CD4-positive, alpha-beta memory T cell (primary cell): ENCODE measurements at regions of chr11 and their contacts with region 1.

Region 1: GRCh38 chr11:13880634-13881033 is 81.9 kb upstream of the SPON1 start:
- DNase-seq: no peak
- H3K4me3 ChIP-seq: no peak overlapping the region
- H3K4me3 Mint-ChIP-seq: no peak overlapping the region
- H3K27ac ChIP-seq: no peak overlapping the region
- H3K27ac Mint-ChIP-seq: peak overlapping the region in 4 of 7 donors; percentile 8 to 75 (median 36)
- H3K4me1 ChIP-seq: no peaks in the 10 kb centered on the region
- H3K4me1 Mint-ChIP-seq: peaks cover 0 to 8% (median 4%) of the 10 kb centered on the region in 4 donors
- H3K27me3 ChIP-seq: no peaks in the 10 kb centered on the region
- H3K27me3 Mint-ChIP-seq: no peaks in the 10 kb centered on the region

Region 2: GRCh38 chr11:13850231-13851005 is 30.2 kb before region 1 on chr11:
- CTCF ChIA-PET with region 1: no interaction called
- POLR2A ChIA-PET with region 1: no interaction called
- intact Hi-C with region 1: no loop called
- DNase-seq: no peak
- H3K4me3 ChIP-seq: no peak overlapping the region
- H3K4me3 Mint-ChIP-seq: peak overlapping the region in 1 of 8 donors; percentile 21
- H3K27ac ChIP-seq: no peak overlapping the region
- H3K27ac Mint-ChIP-seq: peak overlapping the region in 3 of 7 donors; percentile 43 to 53 (median 49)
- H3K4me1 ChIP-seq: peaks cover 4% of the 10 kb centered on the region
- H3K4me1 Mint-ChIP-seq: peaks cover 10 to 14% (median 13%) of the 10 kb centered on the region in 4 donors
- H3K27me3 ChIP-seq: no peaks in the 10 kb centered on the region
- H3K27me3 Mint-ChIP-seq: peaks cover 6 to 9% of the 10 kb centered on the region in 2 donors

Region 3: DNA sequence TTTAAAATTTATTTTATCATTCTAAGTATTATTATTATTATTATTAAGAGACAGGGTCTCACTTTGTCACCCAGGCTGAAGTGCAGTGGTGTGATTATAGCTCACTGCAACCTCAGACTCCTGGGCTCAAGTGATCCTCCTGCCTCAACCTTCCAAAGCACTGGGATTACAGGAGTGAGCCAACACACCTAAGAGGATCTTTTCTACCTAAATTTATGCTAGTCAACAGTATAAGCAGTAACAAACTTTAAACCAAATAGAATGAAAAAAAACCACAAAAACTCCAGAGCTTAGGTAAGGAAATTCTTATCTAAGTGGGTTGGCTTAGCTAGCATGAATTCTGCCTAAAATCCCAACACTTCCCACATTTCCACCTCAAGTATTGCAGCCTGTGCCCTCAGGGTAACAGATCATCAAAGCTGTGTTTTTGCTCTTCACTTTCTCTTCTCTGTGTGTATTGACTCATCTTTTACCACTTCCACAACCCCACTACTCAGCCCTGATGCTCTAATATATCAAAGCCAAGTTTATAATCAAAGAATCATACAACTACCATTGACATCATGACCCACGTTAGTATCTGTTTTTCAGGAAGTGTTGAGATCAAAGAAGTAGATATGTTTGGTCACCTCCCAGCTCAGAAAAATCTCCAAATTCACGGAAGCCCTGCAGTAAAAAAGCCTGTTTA is 11.8 kb before region 1 on chr11:
- CTCF ChIA-PET with region 1: interaction called, 10 read pairs
- POLR2A ChIA-PET with region 1: interaction called, 5 read pairs
- intact Hi-C with region 1: no loop called
- DNase-seq: peak; percentile 80 to 91 (median 84)
- H3K4me3 ChIP-seq: no peak overlapping the region
- H3K4me3 Mint-ChIP-seq: peak overlapping the region in 7 of 8 donors; percentile 1 to 56 (median 43)
- H3K27ac ChIP-seq: peak overlapping the region; percentile 55
- H3K27ac Mint-ChIP-seq: peak overlapping the region; percentile 77 to 97 (median 96)
- H3K4me1 ChIP-seq: peaks cover 32% of the 10 kb centered on the region
- H3K4me1 Mint-ChIP-seq: peaks cover 30 to 49% (median 35%) of the 10 kb centered on the region in 4 donors
- H3K27me3 ChIP-seq: no peaks in the 10 kb centered on the region
- H3K27me3 Mint-ChIP-seq: no peaks in the 10 kb centered on the region